ENCODE measurements at regions of chr11 and their contacts with region 1.

Region 1: DNA sequence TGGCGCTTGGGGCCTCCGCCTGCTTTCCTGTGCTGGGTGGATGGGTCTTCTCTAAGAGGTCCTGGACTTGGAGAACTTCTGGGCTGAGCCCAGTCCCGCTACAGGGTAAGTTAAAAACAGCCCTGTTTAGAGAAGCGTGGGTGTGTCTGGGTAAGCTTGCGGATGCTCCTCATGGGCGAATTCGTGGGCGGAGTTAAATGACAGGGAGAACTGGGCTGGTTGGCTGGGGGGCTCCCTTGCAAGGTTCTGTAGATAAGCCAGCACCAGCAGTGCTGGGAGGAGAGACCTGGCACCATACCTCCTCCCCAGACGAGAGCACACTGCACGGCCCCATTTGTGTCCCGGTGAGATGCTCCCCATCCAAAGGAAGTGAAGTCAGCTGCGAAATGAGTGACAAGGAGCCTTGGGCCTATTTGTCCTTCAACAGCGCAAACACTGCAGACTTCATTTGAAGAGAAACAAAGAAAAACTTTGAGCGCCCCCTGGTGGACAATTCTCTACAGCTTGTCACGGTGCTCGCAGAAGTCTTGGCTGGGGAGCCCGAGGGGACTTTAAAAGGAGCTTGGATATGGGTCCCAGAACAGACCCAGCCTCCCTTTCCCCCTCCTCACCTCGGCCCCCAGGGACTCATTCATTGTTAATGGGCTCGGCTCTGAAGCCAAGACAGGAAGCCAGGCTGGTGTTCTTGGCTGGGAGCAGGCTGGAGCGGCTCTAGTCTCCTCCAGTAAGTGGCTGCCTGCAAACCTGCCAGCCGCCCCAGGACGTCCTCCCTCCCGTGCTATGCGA is 39.5 kb downstream of the TP53I11 start:
- DNase-seq: peak; percentile 94
- ATAC-seq: peak; percentile 74
- H3K4me3 Mint-ChIP-seq: peak overlapping the region; percentile 54
- H3K27ac Mint-ChIP-seq: no peak overlapping the region
- H3K4me1 Mint-ChIP-seq: peaks cover 36% of the 10 kb centered on the region
- H3K27me3 Mint-ChIP-seq: no peaks in the 10 kb centered on the region
- CTCF ChIP-seq: peak; percentile 87

Region 2: DNA sequence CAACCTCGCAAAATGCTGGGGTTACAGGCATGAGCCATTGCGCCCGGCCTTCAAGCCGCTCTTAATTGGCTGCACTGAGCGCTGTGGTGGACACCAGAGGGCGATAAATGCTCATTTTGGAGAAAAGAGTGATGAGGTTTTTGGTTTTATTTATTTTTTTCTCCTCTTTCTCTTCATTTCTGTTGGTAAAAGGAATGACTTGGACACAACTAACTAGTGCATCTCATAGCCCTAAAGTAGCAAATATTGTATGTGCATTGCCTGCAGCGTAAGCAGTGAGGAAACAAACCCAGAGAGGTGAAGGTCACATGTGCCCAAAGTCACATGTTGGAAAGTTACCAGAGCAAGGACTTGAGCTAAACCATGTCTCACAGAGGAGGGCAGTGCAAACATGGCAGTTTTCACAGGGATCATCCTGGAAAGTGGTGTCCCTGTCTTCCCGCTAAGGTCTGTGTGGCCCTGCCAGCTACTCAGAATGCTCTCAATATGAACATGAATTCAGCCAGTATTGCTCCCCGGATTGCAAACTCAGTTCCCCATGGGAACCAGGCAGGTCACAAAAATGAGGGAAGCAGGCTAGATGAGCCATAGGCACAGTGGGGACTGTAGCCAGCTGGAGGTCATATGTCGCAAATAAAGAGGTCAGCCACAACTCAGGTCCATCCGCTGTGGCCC is 354.4 kb before region 1 on chr11:
- CTCF ChIA-PET with region 1: interaction called, 31 read pairs
- POLR2A ChIA-PET with region 1: no interaction called
- DNase-seq: peak; percentile 67
- ATAC-seq: peak; percentile 32
- H3K4me3 Mint-ChIP-seq: no peak overlapping the region
- H3K27ac Mint-ChIP-seq: no peak overlapping the region; the same call in 1 of the 2 replicates
- H3K4me1 Mint-ChIP-seq: peaks cover 31% of the 10 kb centered on the region
- H3K27me3 Mint-ChIP-seq: peaks cover 8% of the 10 kb centered on the region
- CTCF ChIP-seq: peak; percentile 53

Region 3: GRCh38 chr11:44727373-44728287 is 183.6 kb before region 1 on chr11:
- CTCF ChIA-PET with region 1: interaction called, 16 read pairs
- POLR2A ChIA-PET with region 1: interaction called, 5 read pairs
- DNase-seq: peak; percentile 86
- ATAC-seq: peak; percentile 58
- H3K4me3 Mint-ChIP-seq: peak overlapping the region; percentile 78
- H3K27ac Mint-ChIP-seq: no peak overlapping the region
- H3K4me1 Mint-ChIP-seq: peaks cover 57% of the 10 kb centered on the region
- H3K27me3 Mint-ChIP-seq: peaks cover 75% of the 10 kb centered on the region
- CTCF ChIP-seq: peak; percentile 97

Region 4: GRCh38 chr11:44775366-44775984 is 135.7 kb before region 1 on chr11:
- CTCF ChIA-PET with region 1: interaction called, 50 read pairs
- POLR2A ChIA-PET with region 1: no interaction called
- DNase-seq: peak; percentile 78
- ATAC-seq: peak; percentile 76
- H3K4me3 Mint-ChIP-seq: no peak overlapping the region
- H3K27ac Mint-ChIP-seq: peak overlapping the region; percentile 30; the same call in 1 of the 2 replicates
- H3K4me1 Mint-ChIP-seq: peaks cover 71% of the 10 kb centered on the region
- H3K27me3 Mint-ChIP-seq: no peaks in the 10 kb centered on the region; the same call in 1 of the 2 replicates
- CTCF ChIP-seq: peak; percentile 82

Region 5: GRCh38 chr11:44868455-44869421 is 42.5 kb before region 1 on chr11:
- CTCF ChIA-PET with region 1: interaction called, 13 read pairs
- POLR2A ChIA-PET with region 1: no interaction called
- DNase-seq: no peak
- ATAC-seq: peak; percentile 29
- H3K4me3 Mint-ChIP-seq: no peak overlapping the region
- H3K27ac Mint-ChIP-seq: 0 out of 2 replicates have a peak overlapping the region, but pooled peaks have one; percentile 44
- H3K4me1 Mint-ChIP-seq: peaks cover 22% of the 10 kb centered on the region
- H3K27me3 Mint-ChIP-seq: peaks cover 2% of the 10 kb centered on the region; the same call in 1 of the 2 replicates
- CTCF ChIP-seq: no peak

Region 6: GRCh38 chr11:44927174-44927661 is 16.0 kb after region 1 on chr11:
- CTCF ChIA-PET with region 1: interaction called, 135 read pairs
- POLR2A ChIA-PET with region 1: interaction called, 3 read pairs
- DNase-seq: peak; percentile 89
- ATAC-seq: peak; percentile 68
- H3K4me3 Mint-ChIP-seq: no peak overlapping the region
- H3K27ac Mint-ChIP-seq: no peak overlapping the region; the same call in 1 of the 2 replicates
- H3K4me1 Mint-ChIP-seq: peaks cover 28% of the 10 kb centered on the region
- H3K27me3 Mint-ChIP-seq: no peaks in the 10 kb centered on the region; the same call in 1 of the 2 replicates
- CTCF ChIP-seq: peak; percentile 86

Region 7: GRCh38 chr11:45073685-45074141 is 162.5 kb after region 1 on chr11:
- CTCF ChIA-PET with region 1: no interaction called
- POLR2A ChIA-PET with region 1: no interaction called
- DNase-seq: no peak
- ATAC-seq: no peak; the same call in 1 of the 2 replicates
- H3K4me3 Mint-ChIP-seq: no peak overlapping the region
- H3K27ac Mint-ChIP-seq: no peak overlapping the region
- H3K4me1 Mint-ChIP-seq: peaks cover 5% of the 10 kb centered on the region
- H3K27me3 Mint-ChIP-seq: no peaks in the 10 kb centered on the region
- CTCF ChIP-seq: no peak